ENCODE measurements at regions of chr3 and their contacts with region 1.

Region 1: GRCh38 chr3:22960105-22960984 is 242.8 kb upstream of the UBE2E2 start:
- DNase-seq: peak; percentile 61
- H3K4me3 Mint-ChIP-seq: no peak overlapping the region
- H3K27ac Mint-ChIP-seq: no peak overlapping the region
- H3K4me1 Mint-ChIP-seq: no peaks in the 10 kb centered on the region
- H3K27me3 Mint-ChIP-seq: peaks cover 15% of the 10 kb centered on the region
- CTCF ChIP-seq: peak; percentile 81

Region 2: DNA sequence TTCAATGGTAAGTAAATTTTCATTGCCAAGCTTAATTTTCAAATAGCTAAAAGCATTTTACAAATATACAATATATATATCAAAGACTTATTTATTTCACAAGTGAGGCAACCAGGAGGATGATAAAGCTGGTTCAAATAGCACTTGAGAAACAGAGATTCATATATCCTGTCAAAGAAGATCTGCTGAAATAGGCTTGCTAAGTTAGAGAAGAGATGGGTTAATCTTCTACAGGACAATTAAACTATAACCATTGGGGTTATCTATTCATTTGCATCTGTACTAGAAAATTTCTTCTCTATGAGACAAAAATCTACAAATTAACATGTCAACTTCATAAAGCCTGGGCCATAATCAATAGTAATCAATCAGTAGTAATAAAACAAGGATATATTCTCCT is 395.0 kb before region 1 on chr3:
- CTCF ChIA-PET with region 1: interaction called, 18 read pairs
- POLR2A ChIA-PET with region 1: no interaction called
- intact Hi-C with region 1: loop called (anchors 2 kb)
- DNase-seq: no peak
- H3K4me3 Mint-ChIP-seq: no peak overlapping the region
- H3K27ac Mint-ChIP-seq: no peak overlapping the region
- H3K4me1 Mint-ChIP-seq: peaks cover 5% of the 10 kb centered on the region
- H3K27me3 Mint-ChIP-seq: no peaks in the 10 kb centered on the region
- CTCF ChIP-seq: no peak

Region 3: GRCh38 chr3:22729985-22730384 is 230.4 kb before region 1 on chr3:
- CTCF ChIA-PET with region 1: interaction called, 13 read pairs
- POLR2A ChIA-PET with region 1: no interaction called
- intact Hi-C with region 1: no loop called
- DNase-seq: peak; percentile 35
- H3K4me3 Mint-ChIP-seq: no peak overlapping the region
- H3K27ac Mint-ChIP-seq: no peak overlapping the region
- H3K4me1 Mint-ChIP-seq: peaks cover 18% of the 10 kb centered on the region
- H3K27me3 Mint-ChIP-seq: no peaks in the 10 kb centered on the region
- CTCF ChIP-seq: peak; percentile 45

Region 4: DNA sequence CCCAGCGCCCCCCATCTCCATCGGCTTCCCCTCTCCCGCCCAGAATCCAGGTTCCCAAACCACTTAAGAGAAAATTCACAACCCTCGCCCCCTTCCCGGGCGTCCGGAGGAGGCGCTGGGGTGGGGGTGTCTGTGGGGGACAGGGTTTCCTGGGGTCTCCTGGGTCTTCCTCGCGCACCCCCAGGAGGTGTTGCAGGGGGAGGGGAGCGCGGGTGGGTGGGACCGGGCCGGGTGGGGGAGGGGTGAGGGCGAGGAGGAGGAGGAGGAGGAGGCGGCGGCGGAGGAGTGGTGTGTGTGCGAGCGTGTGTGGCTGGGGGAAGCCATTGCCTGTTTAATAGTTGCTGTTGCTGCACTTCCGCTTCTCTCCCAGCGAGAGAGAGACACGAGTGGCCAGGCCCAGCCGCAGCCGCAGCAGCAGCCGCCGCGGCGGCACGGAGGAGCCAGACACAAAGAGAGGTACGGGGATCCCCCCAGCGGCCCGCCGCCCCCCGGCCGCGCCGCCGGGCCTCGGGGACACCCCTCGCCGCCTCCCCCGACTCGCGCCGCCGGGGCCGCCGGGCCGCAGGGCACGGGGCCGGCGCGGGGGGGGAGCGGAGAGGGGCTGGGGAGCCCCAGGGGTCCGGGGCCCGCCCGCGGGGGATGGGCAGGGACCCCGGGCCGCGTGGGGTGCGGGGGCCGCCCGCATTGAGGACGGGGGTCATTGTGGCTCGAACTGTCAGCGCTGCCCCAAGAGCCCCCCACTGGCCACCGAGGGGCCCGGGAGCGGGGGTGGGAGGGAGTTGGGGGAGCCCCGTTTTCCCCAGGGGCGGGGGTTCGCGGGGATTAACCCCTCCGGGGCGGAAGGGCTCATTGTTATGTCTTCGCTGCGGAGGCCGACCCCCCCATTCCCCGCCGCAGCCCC is 845.5 kb after region 1 on chr3 and contains the start of gene UBE2E1:
- CTCF ChIA-PET with region 1: no interaction called
- POLR2A ChIA-PET with region 1: no interaction called
- intact Hi-C with region 1: loop called (anchors 10 kb)
- DNase-seq: peak; percentile 60
- H3K4me3 Mint-ChIP-seq: peak within 1 kb of the TSS; percentile 92
- H3K27ac Mint-ChIP-seq: peak within 1 kb of the TSS; percentile 96
- H3K4me1 Mint-ChIP-seq: peaks cover 40% of the 10 kb centered on the region
- H3K27me3 Mint-ChIP-seq: no peaks in the 10 kb centered on the region
- CTCF ChIP-seq: no peak
- total RNA-seq, gene UBE2E1: 128 and 130 TPM in 2 replicates

Measured in MCF 10A (cell line).